ENCODE measurements at regions of chrX and their contacts with region 1.

Region 1: GRCh38 chrX:46446727-46447378 is 98.4 kb downstream of the ZNF674 start:
- DNase-seq: peak; percentile 91
- ATAC-seq: peak; percentile 99

Region 2: DNA sequence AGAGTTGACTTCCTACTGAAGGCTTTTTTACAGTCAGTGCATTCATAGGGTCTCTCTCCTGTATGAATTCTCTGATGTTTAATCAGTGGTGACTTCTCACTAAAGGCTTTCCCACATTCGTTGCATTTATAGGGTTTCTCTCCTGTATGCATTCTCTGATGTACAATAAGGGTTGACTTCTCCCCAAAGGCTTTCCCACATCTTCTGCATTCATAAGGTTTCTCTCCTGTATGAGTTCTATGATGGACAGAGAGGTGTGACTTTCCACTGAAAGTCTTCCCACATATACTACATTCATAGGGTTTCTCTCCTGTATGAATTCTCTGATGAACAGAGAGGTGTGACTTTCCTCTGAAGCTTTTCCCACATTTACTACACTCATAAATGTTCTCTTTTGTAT is 53.2 kb after region 1 on chrX:
- intact Hi-C with region 1: no loop called
- DNase-seq: no peak
- ATAC-seq: no peak

Region 3: DNA sequence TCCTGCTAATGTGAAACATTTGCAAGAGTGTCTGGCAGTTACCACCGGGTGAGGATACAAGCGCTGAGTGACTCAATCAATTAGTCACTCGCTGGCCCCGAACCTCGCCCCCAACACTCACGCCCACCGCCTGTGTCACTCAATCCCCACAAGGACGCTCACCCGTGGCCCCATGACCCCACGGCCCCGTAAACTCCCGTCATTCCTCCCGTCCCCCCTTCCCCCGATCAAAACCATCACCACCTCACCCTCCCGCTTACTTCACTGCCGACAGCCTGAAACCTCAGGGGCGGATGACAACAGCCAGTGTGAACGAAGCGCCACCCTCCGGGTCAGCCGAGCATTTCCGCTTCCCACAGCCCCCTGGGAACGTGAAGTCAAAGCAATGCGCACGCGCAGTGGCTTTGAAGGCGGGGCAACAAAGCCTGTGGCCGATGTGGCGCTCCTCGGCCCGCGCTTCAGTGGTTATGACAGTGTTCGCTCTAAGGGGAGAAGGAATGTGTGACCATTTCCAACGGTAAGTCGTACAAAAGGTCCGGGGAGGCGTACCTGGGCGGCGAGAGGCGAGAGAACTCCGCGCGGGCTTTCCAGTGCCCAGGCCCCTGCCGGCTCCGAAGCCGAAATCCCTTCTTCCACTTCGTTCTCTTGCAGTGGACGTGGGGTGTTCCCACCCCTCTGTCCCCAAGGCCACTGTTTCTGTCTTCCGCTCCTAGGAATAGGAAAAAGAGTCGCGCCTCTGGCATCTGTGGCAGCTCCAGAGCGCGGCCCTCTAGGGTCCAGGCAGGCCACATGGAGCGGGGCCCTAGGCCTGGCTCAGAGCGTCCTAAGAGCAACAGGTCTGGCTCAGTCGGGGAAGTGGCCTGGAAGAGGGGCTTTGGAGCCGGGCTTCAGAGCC is 98.5 kb after region 1 on chrX and contains the start of gene ZNF674:
- intact Hi-C with region 1: loop called (anchors 10 kb)
- DNase-seq: peak; percentile 95
- ATAC-seq: peak; percentile 97
- total RNA-seq, gene ZNF674: 2.2 TPM

Region 4: DNA sequence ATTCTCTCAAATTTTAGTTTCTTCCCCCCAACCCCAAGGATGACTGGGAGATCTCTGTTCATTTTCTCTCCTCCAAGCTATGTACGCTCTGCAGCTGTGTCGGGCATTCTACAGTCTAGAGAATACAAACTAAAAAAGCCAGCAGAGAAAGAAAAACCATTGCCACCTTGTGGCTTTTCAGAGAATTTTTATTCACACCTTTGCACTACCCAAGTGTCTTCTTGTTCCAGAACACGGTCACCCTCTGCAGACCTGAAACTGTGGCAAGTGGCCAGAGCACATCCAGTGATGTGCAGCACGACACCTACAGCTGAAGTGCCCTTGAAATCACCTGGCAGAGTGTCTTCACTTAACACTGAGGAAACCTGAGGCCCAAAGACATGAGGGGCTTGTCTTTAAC is 195.3 kb after region 1 on chrX:
- intact Hi-C with region 1: loop called (anchors 10 kb)
- DNase-seq: no peak
- ATAC-seq: peak; percentile 85